Posterior vena cava (tissue), 2 donors: ENCODE measurements at regions of chr10 and their contacts with region 1.

Region 1: DNA sequence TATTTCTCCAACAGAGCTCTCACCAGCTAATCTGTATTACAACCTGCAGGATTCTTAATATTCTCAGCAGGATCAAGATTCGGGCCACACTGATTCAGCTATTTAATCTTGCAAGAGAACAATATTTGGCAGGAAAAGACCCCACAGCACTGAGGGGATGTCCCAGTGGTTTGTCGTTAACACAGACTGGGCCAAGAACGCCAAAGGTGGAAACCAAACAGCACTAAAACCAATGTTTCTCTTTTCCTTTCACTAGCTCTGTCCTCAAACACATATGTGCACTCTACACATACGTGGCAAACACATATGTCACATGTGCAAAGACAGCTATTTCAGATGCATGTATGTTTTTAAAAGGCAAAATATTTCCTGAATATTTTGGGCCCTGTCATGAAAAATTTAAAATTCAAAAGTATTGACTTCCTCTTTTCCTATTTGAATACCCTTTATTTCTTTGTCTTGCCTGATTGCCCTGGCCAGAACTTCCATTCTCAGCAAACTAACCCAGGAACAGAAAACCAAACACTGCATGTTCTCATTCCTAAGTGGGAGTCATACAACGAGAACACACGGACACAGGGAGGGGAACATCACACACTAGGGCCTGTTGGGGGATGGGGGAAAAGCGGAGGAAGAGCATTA is 51.7 kb upstream of the NEBL start:
- DNase-seq: no peak

Region 2: GRCh38 chr10:20343036-20343435 is 605.8 kb before region 1 on chr10:
- intact Hi-C with region 1: loop called in 1 of 2 experiments (anchors 5 kb)
- DNase-seq: no peak